HEK293 (cell line): ENCODE measurements at regions of chr21 and their contacts with region 1.

Region 1: GRCh38 chr21:28949318-28949717 is 43.4 kb downstream of the LTN1 start:
- H3K4me3 ChIP-seq: no peak overlapping the region
- H3K27ac ChIP-seq: no peak overlapping the region
- H3K4me1 ChIP-seq: no peaks in the 10 kb centered on the region
- CTCF ChIP-seq: no peak

Region 2: GRCh38 chr21:28781602-28782276 is 167.6 kb before region 1 on chr21:
- CTCF ChIA-PET with region 1: no interaction called
- POLR2A ChIA-PET with region 1: no interaction called
- H3K4me3 ChIP-seq: no peak overlapping the region
- H3K27ac ChIP-seq: no peak overlapping the region
- H3K4me1 ChIP-seq: no peaks in the 10 kb centered on the region
- CTCF ChIP-seq: 0 out of 2 replicates have a peak, but pooled peaks have one; percentile 13

Region 3: DNA sequence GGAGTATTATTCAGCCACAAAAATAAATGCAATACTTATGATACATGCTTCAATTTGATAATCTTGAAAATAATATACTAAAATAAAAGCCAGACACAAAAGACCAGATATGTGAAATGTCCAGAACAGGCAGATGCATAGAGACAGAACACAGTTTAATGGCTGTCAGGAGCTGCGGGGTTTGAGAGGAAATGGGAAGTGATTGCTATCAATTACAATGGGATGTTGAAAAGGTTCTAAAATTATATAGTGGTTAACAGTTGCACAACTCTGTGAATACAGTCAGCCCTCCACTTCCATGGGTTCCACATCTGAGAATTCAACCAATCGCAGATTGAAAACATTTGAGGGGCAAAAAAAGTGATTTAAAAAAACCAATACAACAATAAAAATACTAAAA is 10.6 kb before region 1 on chr21:
- CTCF ChIA-PET with region 1: interaction called, 11 read pairs
- POLR2A ChIA-PET with region 1: no interaction called
- H3K4me3 ChIP-seq: no peak overlapping the region
- H3K27ac ChIP-seq: no peak overlapping the region
- H3K4me1 ChIP-seq: no peaks in the 10 kb centered on the region
- CTCF ChIP-seq: no peak